Ovary (tissue), 10 donors: ENCODE measurements at regions of chr12 and their contacts with region 1.

Region 1: DNA sequence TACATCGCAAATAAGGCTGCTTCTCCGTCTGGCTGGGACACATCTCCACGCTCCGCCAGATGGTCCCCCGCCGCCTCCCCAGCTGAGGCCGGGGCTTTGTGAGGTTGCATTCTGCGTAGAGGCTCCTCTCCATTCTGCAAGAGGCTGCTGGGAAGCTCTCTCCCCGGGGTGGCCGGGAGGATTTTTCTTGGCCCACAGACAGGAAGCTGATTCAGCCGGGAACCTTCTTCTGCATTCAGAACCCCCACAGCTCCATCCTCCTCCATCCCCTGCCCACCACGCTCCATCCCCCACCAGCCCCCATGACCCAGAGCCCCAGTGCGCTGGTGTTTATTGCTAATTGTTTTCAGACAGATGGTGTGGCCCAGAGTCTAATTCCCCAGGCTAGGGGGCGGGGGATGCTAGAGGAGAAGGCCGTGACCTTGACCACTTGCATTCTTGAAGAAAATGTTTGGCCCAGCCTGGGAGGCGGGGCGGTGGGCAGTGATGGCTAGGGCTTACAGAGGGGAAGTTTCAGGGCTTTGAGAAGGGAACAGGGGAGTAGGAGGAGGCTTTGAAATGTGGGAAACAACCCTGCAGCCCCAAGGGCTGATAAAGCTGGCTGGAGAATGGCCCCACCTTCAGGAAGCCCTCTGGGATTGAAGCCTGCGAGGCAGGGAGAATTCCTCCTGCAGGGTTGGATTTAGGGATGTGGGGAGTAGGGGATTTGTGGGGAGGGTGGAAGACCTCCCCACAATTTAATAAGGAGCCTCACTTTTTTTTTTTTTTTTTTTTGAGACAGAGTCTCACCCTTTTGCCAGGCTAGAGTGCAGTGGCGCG is 88.5 kb upstream of the NCOR2 start:
- DNase-seq: peak; percentile 90 to 95 (median 91)
- H3K4me3 ChIP-seq: peak overlapping the region; percentile 23
- H3K27ac ChIP-seq: peak overlapping the region in 1 of 2 donors; percentile 83
- H3K4me1 ChIP-seq: peaks cover 15% of the 10 kb centered on the region
- H3K27me3 ChIP-seq: no peaks in the 10 kb centered on the region
- CTCF ChIP-seq: no peak
- EP300 ChIP-seq: no peak
- POLR2A ChIP-seq: peak; percentile 42

Region 2: DNA sequence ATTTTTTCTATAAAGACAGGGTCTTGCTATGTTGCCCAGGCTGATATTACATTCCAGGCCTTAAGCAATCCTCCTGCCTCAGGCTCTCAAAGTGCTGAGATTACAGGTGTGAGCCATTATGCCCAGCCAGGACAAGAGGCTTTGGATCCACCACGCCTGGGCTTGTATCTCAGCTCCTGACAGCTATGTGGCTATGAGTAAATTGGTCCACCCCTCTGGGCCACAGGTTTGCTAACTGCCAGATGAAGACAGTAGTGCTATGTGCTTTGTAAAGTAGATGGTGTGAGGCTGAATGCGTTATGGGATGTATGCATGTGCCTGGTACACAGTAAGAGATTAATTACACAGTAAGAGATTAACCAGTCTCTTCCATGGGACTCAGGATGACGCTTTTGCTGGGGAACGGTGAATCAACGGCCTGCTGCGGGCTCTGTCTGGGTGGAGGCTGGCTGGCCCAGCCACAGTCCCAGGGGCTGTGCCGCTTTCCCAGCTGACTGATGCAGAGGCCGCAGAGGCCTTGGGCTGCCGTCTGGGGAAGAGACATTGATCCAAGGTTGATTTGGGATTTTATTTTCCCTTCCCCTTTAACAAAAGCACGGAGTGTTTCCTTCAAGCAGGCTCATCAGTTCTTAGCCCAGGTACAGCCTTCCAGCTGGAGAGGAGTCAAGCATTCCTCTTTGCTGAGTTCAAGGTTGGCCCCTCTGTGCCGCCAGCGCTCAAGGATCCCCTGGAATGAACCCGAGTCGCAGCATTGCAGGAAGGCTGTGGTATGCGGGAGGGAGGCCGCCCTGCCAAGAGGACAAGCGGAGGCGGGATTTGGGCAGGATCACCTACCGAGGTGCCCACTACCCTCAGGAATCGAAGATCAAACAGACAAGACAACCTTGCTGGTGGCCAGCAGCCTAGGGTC is 34.9 kb before region 1 on chr12:
- intact Hi-C with region 1: loop called in 1 of 4 experiments (anchors 5 kb)
- DNase-seq: peak; percentile 74 to 88 (median 82)
- H3K4me3 ChIP-seq: no peak overlapping the region
- H3K27ac ChIP-seq: peak overlapping the region; percentile 32 to 72
- H3K4me1 ChIP-seq: peaks cover 20% of the 10 kb centered on the region
- H3K27me3 ChIP-seq: no peaks in the 10 kb centered on the region
- CTCF ChIP-seq: no peak
- EP300 ChIP-seq: no peak
- POLR2A ChIP-seq: no peak